Pancreas (tissue), 10 donors: ENCODE measurements at regions of chr14 and their contacts with region 1.

Region 1: GRCh38 chr14:96304956-96305355 is 48.9 kb downstream of the BDKRB1 start:
- DNase-seq: no peak
- ATAC-seq: no peak
- H3K4me3 ChIP-seq: no peak overlapping the region
- H3K27ac ChIP-seq: no peak overlapping the region
- H3K4me1 ChIP-seq: peaks cover 0 to 2% (median 1%) of the 10 kb centered on the region in 3 donors
- H3K27me3 ChIP-seq: no peaks in the 10 kb centered on the region
- CTCF ChIP-seq: no peak

Region 2: DNA sequence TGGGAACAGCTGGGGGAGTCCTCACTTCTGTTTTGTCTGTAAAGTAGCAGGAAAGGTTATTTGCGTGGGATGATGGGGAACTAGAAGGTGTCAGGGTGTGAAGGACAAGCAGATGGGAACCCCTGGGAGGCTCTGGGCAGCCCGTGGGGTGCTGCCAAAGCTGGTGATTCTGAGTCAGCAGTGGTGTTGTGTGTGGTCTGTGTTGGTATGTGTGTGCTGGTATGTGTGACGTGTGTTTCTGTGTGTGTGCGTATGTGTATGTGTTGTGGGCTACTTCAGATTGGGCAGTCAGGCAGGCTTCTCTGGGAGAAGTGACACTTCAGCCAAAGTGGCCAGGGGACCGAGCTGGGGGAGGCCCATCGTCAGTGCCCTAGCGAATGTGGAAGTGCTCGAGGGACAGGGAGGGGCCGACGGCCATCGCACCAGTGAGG is 115.7 kb before region 1 on chr14:
- intact Hi-C with region 1: no loop called
- DNase-seq: no peak
- ATAC-seq: no peak
- H3K4me3 ChIP-seq: no peak overlapping the region
- H3K27ac ChIP-seq: no peak overlapping the region
- H3K4me1 ChIP-seq: peaks cover 0 to 3% (median 0%) of the 10 kb centered on the region in 3 donors
- H3K27me3 ChIP-seq: no peaks in the 10 kb centered on the region
- CTCF ChIP-seq: no peak

Region 3: DNA sequence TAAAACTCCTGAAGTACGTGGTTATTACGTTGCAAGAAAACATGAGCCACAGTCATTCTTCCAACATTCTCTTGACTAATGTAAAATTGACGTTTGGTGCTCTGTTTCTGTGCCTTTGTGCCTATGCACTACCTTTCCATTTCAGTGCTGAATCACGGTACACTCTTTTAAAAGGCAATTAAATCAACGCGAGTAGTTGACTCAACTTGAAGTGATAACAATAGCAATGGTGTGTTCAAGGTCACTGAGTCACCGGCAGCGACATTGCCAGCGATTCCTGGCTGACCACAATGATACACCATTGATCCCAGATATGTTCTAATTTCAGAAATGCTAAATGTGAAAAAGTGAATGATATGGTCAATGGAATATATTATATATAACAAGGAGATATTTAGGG is 104.7 kb after region 1 on chr14:
- intact Hi-C with region 1: loop called in 1 of 3 experiments (anchors 10 kb)
- DNase-seq: peak in 2 of 6 donors; percentile 28 to 37
- ATAC-seq: peak; percentile 23 to 59 (median 46)
- H3K4me3 ChIP-seq: no peak overlapping the region
- H3K27ac ChIP-seq: no peak overlapping the region
- H3K4me1 ChIP-seq: no peaks in the 10 kb centered on the region
- H3K27me3 ChIP-seq: no peaks in the 10 kb centered on the region
- CTCF ChIP-seq: no peak

Region 4: DNA sequence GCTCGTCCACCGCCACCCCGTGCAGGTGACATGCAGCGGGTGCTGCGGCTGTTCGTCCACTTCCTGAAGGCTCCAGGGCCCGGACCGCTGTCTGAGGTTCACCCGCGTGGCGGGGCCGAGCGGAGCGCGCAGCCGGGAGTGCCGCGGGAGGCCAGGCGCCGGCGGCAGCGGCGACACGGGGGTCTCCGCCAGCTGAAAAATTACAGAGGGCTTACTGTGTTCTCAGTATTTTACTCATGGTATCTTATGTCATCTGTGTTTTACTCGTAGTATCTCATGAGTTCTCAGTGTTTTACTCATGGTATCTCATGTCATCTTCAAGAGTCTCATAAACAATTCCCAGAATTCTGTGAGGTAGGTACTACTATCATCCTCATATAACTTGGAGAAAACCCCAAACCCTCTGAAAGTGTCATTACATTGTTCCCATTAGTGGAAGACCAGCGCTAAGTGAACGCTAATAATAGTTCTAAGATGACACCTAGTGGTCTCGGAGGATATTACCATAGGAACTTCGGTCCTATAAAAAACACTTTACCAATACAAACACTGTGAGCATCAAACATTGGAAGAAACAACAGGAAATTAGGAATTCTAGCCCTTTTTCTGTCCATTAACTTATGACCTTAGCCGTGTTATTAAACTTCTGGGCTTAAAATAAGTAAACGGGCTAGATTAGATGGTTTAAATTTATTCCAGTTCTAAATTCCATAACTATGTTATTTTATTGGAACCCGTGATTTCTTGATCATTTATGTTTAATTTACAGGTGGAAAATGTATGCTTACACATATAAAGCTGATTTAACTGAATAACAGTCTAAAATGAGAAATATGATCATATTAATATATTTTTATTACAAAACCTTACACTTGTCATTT is 119.4 kb after region 1 on chr14:
- intact Hi-C with region 1: loop called in 2 of 3 experiments (anchors 10 kb)
- DNase-seq: peak in 5 of 6 donors; percentile 21 to 77 (median 37)
- ATAC-seq: peak; percentile 92 to 99 (median 96)
- H3K4me3 ChIP-seq: peak overlapping the region in 3 of 4 donors; percentile 26 to 55 (median 33)
- H3K27ac ChIP-seq: no peak overlapping the region
- H3K4me1 ChIP-seq: peaks cover 0 to 3% (median 0%) of the 10 kb centered on the region in 3 donors
- H3K27me3 ChIP-seq: no peaks in the 10 kb centered on the region
- CTCF ChIP-seq: peak; percentile 59 to 82 (median 67)